ENCODE measurements at regions of chr2 and their contacts with region 1.

Region 1: GRCh38 chr2:225017713-225018112 is 24.6 kb downstream of the DOCK10 start:
- DNase-seq: no peak
- ATAC-seq: no peak
- H3K4me3 ChIP-seq: no peak overlapping the region
- H3K4me3 Mint-ChIP-seq: no peak overlapping the region
- H3K27ac ChIP-seq: no peak overlapping the region
- H3K27ac Mint-ChIP-seq: peak overlapping the region; percentile 37
- H3K4me1 ChIP-seq: peaks cover 21% of the 10 kb centered on the region
- H3K4me1 Mint-ChIP-seq: peaks cover 77% of the 10 kb centered on the region
- H3K27me3 ChIP-seq: no peaks in the 10 kb centered on the region
- H3K27me3 Mint-ChIP-seq: no peaks in the 10 kb centered on the region
- CTCF ChIP-seq: no peak

Region 2: DNA sequence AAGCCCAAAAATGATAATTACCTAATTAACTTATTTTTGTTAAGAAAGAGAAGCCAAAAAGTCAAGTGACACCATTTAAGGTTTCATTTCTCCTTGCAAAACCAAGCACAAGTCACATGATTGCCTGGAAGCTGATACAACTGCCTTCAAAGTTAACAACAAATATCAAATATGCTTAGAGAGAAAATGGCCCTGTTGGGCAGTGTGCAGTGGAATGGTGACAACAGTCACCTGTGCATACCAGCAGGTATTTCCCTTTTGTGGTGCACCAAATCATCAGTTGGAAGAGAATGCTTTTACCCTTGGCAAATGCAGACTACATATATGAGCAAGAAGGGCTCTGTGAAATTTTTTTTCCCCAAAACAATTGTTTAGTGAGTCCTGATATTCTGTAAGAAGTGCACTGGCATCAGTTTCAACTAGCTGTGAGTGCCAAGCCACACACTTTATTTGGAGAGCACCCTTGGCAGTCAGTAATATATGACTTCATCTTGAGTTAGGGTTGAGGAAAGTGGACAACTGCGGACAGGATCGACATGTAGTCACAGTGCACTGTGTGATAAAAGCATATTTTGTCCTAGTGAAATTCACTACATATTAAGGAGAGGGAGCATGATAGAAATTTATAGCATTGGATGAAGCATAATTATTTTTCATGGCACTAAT is 99.5 kb after region 1 on chr2:
- CTCF ChIA-PET with region 1: no interaction called
- POLR2A ChIA-PET with region 1: no interaction called
- intact Hi-C with region 1: loop called in 1 of 2 experiments (anchors 5 kb)
- DNase-seq: no peak
- ATAC-seq: no peak
- H3K4me3 ChIP-seq: no peak overlapping the region
- H3K4me3 Mint-ChIP-seq: no peak overlapping the region
- H3K27ac ChIP-seq: no peak overlapping the region
- H3K27ac Mint-ChIP-seq: no peak overlapping the region
- H3K4me1 ChIP-seq: no peaks in the 10 kb centered on the region
- H3K4me1 Mint-ChIP-seq: peaks cover 9% of the 10 kb centered on the region
- H3K27me3 ChIP-seq: no peaks in the 10 kb centered on the region
- H3K27me3 Mint-ChIP-seq: no peaks in the 10 kb centered on the region
- CTCF ChIP-seq: no peak